ENCODE measurements at regions of chr3 and their contacts with region 1.

Region 1: DNA sequence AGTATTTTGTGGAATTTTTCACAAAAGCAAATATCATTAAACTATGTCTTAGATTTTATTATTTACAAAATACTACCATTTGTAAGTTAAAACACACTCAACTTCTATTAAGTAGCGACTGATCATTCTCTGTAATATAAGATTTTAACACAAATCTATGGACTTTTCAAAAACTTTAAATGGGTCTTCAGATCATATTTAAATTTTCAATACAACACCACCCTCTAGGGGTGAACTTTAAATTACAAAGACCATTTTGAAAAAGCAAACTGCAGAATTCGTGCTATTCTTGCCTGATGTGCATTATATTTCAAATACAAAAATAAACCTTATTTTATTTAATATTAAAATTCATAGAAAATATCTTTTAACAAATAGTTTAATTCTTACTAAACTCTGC is 8.2 kb upstream of the VGLL4 start:
- DNase-seq: no peak

Region 2: GRCh38 chr3:11379233-11379823 is 272.6 kb before region 1 on chr3:
- intact Hi-C with region 1: loop called (anchors 2 kb)
- DNase-seq: no peak

Region 3: DNA sequence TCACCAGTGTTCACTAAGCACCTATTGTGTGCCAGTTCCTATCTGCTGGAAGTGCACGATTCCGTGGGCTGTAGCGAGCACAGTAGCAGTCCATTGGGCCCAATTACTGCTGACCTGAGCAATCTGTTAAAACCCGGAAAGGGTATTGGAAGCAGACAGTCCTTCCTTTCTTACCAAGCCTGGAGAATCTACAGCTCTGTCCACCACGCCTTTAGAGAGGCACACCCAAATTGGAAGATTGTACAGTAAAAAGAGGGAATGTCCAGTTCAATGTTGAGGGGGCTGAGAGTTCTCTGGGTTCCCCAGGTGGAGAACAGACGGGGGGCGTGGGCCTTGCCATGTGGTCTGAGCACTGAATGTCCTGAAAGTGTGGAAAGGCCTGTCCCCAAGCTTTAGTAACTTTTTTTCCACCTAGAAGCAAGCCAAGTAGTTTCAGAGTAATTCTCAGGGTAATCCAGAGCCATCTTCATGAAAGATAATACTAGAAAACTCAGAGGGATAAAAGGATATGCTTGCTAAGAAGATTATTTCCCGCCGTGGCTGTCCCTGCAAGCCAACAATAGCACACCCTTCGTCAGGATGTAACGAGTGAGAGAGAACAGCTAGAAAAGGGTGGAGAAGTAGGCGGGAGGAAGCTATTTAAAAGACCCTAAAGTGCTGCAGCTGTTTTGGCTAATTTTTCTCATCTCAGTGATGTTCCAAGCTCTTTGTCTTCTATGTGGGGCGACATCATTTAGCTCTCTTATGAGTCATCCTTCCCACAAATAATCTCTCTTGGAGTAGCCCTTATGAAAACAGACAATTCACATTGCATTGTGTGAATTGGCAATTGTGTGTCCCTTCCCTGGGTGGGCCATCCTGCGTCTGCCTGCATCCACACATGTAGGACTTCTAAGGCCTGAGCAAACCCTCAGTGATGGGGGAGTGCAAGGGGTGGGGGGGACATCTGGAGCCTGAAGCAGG is 198.7 kb before region 1 on chr3:
- intact Hi-C with region 1: loop called (anchors 5 kb)
- DNase-seq: no peak

Region 4: GRCh38 chr3:11601446-11602238 is 50.3 kb before region 1 on chr3:
- intact Hi-C with region 1: no loop called
- DNase-seq: no peak

Region 5: DNA sequence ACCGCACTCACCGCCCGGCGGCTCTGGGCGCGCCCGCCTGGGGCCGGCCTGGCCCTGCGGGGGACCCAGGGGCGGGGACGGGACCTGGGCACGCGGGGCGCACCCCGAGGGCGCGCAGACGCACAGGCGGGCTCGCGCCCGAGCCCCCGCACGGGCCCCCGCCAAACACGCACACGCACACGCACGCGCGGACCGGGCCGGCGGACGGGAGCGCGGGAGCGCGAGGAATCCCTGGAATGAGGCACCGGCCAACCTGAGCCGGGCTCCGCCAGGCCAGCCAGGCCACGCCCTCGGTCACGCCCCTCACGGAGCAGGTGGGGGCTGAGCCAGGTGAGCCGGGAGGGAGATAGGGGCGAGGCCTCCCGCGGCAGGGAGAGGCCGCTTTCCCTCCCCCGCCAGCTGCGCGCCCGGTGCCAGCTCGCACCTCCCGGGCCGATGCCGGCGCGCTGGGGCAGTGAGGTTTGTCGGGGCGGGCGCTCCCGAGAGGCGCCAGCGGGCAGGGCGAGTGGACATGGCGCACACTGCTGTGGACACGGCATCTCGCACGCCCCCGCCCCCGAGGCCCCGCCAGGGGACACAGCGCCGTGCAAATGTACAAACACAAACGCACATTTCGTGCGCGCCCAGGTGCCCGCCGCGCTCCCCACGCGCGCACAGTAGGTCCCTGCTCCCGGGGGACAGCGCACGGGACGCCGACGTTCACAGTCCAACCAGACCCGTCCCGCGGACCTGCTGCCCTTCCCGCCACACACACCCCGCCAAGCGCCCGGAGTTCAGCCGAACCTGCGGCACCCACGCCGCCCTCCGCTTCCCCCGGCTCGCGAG is 67.7 kb after region 1 on chr3:
- intact Hi-C with region 1: loop called (anchors 5 kb)
- DNase-seq: peak; percentile 87

Region 6: GRCh38 chr3:11803977-11804892 is 152.3 kb after region 1 on chr3:
- intact Hi-C with region 1: loop called (anchors 2 kb)
- DNase-seq: no peak

Region 7: DNA sequence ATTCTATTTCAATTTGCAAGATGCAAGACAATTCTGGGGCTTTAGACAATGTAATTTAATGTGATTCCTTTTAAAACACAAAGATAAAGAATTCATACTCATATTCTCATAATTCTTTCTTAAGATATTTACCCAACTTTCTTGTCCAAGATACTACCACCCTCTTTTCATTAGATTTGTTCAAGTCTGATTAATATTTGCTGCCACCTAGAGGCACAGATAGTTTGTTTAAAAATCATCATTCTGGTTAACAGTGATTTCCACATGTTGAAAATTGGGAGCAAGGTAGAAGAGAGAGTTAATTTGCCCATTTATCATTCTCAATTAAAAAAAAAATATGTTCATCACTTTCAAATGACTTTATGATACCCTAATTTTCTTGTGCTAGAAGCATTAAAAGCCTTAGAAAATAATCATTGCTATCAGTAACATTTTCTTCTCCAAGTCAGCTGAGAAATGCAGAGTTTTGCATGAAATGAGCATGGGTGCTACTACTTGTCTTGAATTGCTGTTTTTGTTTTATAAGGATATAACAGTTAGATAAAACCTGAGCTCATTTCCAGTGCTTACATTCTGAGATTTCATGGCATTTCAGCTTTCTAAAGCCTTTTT is 183.2 kb after region 1 on chr3:
- intact Hi-C with region 1: no loop called
- DNase-seq: no peak